CD8-positive, alpha-beta T cell (primary cell): ENCODE measurements at regions of chr20 and their contacts with region 1.

Region 1: GRCh38 chr20:53708129-53708968 is 114.7 kb upstream of the ZNF217 start:
- DNase-seq: peak in 4 of 9 experiments; percentile 13 to 58 (median 25)
- ATAC-seq: peak; percentile 48
- H3K4me3 ChIP-seq: no peak overlapping the region
- H3K4me3 Mint-ChIP-seq: peak overlapping the region; percentile 48
- H3K27ac ChIP-seq: peak overlapping the region; percentile 29 to 44
- H3K27ac Mint-ChIP-seq: peak overlapping the region; percentile 93
- H3K4me1 ChIP-seq: peaks cover 58% of the 10 kb centered on the region
- H3K4me1 Mint-ChIP-seq: peaks cover 55% of the 10 kb centered on the region
- H3K27me3 ChIP-seq: no peaks in the 10 kb centered on the region
- H3K27me3 Mint-ChIP-seq: no peaks in the 10 kb centered on the region
- CTCF ChIP-seq: no peak

Region 2: GRCh38 chr20:53594068-53595017 is 114.0 kb before region 1 on chr20:
- CTCF ChIA-PET with region 1: no interaction called
- POLR2A ChIA-PET with region 1: interaction called, 4 read pairs
- intact Hi-C with region 1: loop called in 1 of 2 experiments (anchors 5 kb)
- DNase-seq: peak; percentile 94 to 100 (median 98)
- ATAC-seq: peak; percentile 74
- H3K4me3 ChIP-seq: peak overlapping the region; percentile 67 to 83
- H3K4me3 Mint-ChIP-seq: peak overlapping the region; percentile 82
- H3K27ac ChIP-seq: peak overlapping the region; percentile 84 to 87
- H3K27ac Mint-ChIP-seq: peak overlapping the region; percentile 92
- H3K4me1 ChIP-seq: peaks cover 42% of the 10 kb centered on the region
- H3K4me1 Mint-ChIP-seq: peaks cover 59% of the 10 kb centered on the region
- H3K27me3 ChIP-seq: no peaks in the 10 kb centered on the region
- H3K27me3 Mint-ChIP-seq: no peaks in the 10 kb centered on the region
- CTCF ChIP-seq: no peak

Region 3: GRCh38 chr20:53643031-53643832 is 65.1 kb before region 1 on chr20:
- CTCF ChIA-PET with region 1: interaction called, 3 read pairs
- POLR2A ChIA-PET with region 1: interaction called, 3 read pairs
- intact Hi-C with region 1: loop called in 1 of 2 experiments (anchors 5 kb)
- DNase-seq: peak; percentile 39 to 88 (median 71)
- ATAC-seq: peak; percentile 93
- H3K4me3 ChIP-seq: peak overlapping the region; percentile 19 to 47
- H3K4me3 Mint-ChIP-seq: peak overlapping the region; percentile 68
- H3K27ac ChIP-seq: peak overlapping the region; percentile 67 to 80
- H3K27ac Mint-ChIP-seq: peak overlapping the region; percentile 92
- H3K4me1 ChIP-seq: peaks cover 37% of the 10 kb centered on the region
- H3K4me1 Mint-ChIP-seq: peaks cover 55% of the 10 kb centered on the region
- H3K27me3 ChIP-seq: no peaks in the 10 kb centered on the region
- H3K27me3 Mint-ChIP-seq: no peaks in the 10 kb centered on the region
- CTCF ChIP-seq: no peak

Region 4: GRCh38 chr20:53660078-53660909 is 48.1 kb before region 1 on chr20:
- CTCF ChIA-PET with region 1: interaction called, 12 read pairs
- POLR2A ChIA-PET with region 1: no interaction called
- intact Hi-C with region 1: loop called in 1 of 2 experiments (anchors 5 kb)
- DNase-seq: peak in 6 of 9 experiments; percentile 10 to 68 (median 44)
- ATAC-seq: peak; percentile 47
- H3K4me3 ChIP-seq: peak overlapping the region; percentile 45 to 61
- H3K4me3 Mint-ChIP-seq: peak overlapping the region; percentile 87
- H3K27ac ChIP-seq: peak overlapping the region; percentile 49 to 67
- H3K27ac Mint-ChIP-seq: peak overlapping the region; percentile 94
- H3K4me1 ChIP-seq: peaks cover 53% of the 10 kb centered on the region
- H3K4me1 Mint-ChIP-seq: peaks cover 62% of the 10 kb centered on the region
- H3K27me3 ChIP-seq: no peaks in the 10 kb centered on the region
- H3K27me3 Mint-ChIP-seq: no peaks in the 10 kb centered on the region
- CTCF ChIP-seq: no peak

Region 5: DNA sequence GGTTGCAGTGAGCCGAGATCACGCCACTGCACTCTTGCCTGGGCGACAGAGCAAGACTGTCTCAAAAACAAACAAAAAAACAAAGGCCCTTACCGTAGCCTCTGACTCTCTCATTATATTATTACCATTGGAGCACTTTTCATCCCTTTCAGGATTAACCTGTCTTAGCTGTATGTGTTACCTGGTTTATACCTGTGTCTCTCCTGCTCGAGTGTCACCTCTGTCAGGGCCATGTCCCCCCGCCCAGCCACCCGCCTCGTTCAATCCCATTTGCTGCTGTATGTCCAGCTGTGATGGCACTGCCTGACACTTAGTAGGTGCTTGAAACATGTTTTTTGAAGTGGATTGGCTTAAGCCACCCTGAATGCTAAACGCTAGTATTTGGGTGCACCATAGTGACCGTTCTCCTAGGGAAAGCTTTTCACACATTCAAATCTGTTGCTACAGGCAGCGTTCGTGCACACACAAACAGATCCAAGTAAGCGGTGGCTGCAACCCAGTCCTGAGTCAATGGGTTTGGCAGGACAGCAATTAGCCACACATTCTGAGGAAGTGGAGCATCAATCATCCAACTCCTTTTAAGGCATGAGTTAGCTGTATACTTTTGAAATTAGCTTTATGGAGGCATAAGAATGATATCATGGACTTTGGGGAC is 15.8 kb before region 1 on chr20:
- CTCF ChIA-PET with region 1: interaction called, 3 read pairs
- POLR2A ChIA-PET with region 1: interaction called, 7 read pairs
- intact Hi-C with region 1: loop called in 1 of 2 experiments (anchors 1 kb)
- DNase-seq: peak in 1 of 9 experiments; percentile 22
- ATAC-seq: no peak
- H3K4me3 ChIP-seq: peak overlapping the region in 1 of 2 experiments; percentile 16
- H3K4me3 Mint-ChIP-seq: peak overlapping the region; percentile 71
- H3K27ac ChIP-seq: peak overlapping the region in 1 of 2 experiments; percentile 16
- H3K27ac Mint-ChIP-seq: peak overlapping the region; percentile 87
- H3K4me1 ChIP-seq: peaks cover 12% of the 10 kb centered on the region
- H3K4me1 Mint-ChIP-seq: peaks cover 34% of the 10 kb centered on the region
- H3K27me3 ChIP-seq: no peaks in the 10 kb centered on the region
- H3K27me3 Mint-ChIP-seq: no peaks in the 10 kb centered on the region
- CTCF ChIP-seq: no peak

Region 6: DNA sequence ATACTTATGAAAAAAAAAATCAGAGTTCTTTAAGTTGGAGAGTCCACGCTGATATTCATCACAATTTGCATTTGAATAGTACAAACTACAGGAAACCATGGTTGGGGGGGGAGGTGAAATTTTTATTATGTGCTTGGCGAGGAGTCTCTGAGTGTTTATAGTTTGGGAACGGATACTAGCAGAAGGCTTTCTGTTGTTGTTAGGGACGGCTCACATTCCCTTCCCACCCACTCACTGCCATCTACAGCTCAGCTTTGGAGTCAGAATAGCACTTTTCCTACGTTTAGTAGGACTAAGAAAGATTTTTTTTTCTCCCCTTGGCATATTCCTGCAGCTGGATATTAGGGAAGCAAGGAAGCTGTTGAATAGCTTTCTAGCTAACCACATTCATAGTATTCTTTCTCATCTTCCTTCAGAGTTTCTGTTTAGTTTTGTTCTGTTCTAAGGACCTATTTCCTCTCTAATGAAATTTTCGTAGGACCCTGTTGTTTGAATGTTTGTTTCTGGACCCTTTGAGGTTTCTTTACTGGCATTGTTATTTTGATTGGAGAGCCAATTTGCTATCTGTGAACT is 120.4 kb after region 1 on chr20:
- CTCF ChIA-PET with region 1: no interaction called
- POLR2A ChIA-PET with region 1: no interaction called
- intact Hi-C with region 1: loop called in 1 of 2 experiments (anchors 5 kb)
- DNase-seq: peak in 2 of 9 experiments; percentile 27 to 51
- ATAC-seq: peak; percentile 23
- H3K4me3 ChIP-seq: peak overlapping the region; percentile 28 to 33
- H3K4me3 Mint-ChIP-seq: peak overlapping the region; percentile 86
- H3K27ac ChIP-seq: peak overlapping the region; percentile 47 to 88
- H3K27ac Mint-ChIP-seq: peak overlapping the region; percentile 97
- H3K4me1 ChIP-seq: peaks cover 34% of the 10 kb centered on the region
- H3K4me1 Mint-ChIP-seq: peaks cover 57% of the 10 kb centered on the region
- H3K27me3 ChIP-seq: no peaks in the 10 kb centered on the region
- H3K27me3 Mint-ChIP-seq: no peaks in the 10 kb centered on the region
- CTCF ChIP-seq: no peak